ENCODE measurements at regions of chr17 and their contacts with region 1.

Region 1: DNA sequence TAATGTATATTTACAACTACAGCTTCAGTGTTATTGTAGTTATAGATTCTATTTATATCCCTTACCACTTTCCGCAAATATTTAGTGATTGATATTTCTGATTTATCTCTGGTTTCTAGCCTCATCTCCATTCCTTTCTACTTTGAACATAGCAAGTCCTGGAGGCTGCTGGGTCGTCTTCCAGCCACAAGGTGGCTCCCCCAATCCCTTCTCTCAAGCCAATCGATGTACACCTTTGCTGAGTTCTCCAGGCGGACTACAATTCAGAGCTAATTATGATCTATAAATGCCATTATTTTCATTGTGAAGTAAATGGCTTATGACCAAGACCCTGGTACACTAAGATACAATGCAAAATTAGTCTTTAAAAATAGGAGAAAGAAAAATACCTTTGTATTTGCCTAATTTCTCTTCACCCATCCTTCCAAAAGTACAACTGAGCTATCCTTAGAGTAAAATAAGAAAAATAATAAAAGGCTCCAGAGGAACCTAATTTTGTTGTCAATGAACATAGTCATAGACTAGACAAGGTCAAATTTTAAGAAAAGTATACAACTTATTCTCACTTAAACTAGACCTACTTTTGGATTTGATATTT is 122.1 kb downstream of the SKAP1 start:
- DNase-seq: peak in 6 of 9 donors; percentile 25 to 49 (median 34)
- ATAC-seq: peak; percentile 78
- H3K4me3 ChIP-seq: no peak overlapping the region
- H3K4me3 Mint-ChIP-seq: no peak overlapping the region
- H3K27ac ChIP-seq: no peak overlapping the region
- H3K27ac Mint-ChIP-seq: peak overlapping the region in 2 of 9 donors; percentile 1 to 27
- H3K4me1 ChIP-seq: no peaks in the 10 kb centered on the region
- H3K4me1 Mint-ChIP-seq: peaks cover 13 to 57% (median 36%) of the 10 kb centered on the region in 7 donors
- H3K27me3 ChIP-seq: no peaks in the 10 kb centered on the region
- H3K27me3 Mint-ChIP-seq: no peaks in the 10 kb centered on the region

Region 2: GRCh38 chr17:48322060-48322459 is 14.1 kb after region 1 on chr17:
- CTCF ChIA-PET with region 1: interaction called, 6 read pairs
- POLR2A ChIA-PET with region 1: no interaction called
- intact Hi-C with region 1: loop called in 1 of 2 experiments (anchors 2 kb)
- DNase-seq: no peak
- ATAC-seq: no peak
- H3K4me3 ChIP-seq: no peak overlapping the region
- H3K4me3 Mint-ChIP-seq: no peak overlapping the region
- H3K27ac ChIP-seq: no peak overlapping the region
- H3K27ac Mint-ChIP-seq: no peak overlapping the region
- H3K4me1 ChIP-seq: no peaks in the 10 kb centered on the region
- H3K4me1 Mint-ChIP-seq: peaks cover 9 to 48% (median 26%) of the 10 kb centered on the region in 7 donors
- H3K27me3 ChIP-seq: no peaks in the 10 kb centered on the region
- H3K27me3 Mint-ChIP-seq: no peaks in the 10 kb centered on the region

Region 3: GRCh38 chr17:48492401-48493298 is 184.7 kb after region 1 on chr17:
- CTCF ChIA-PET with region 1: no interaction called
- POLR2A ChIA-PET with region 1: no interaction called
- intact Hi-C with region 1: no loop called
- DNase-seq: peak; percentile 38 to 73 (median 58)
- ATAC-seq: peak; percentile 95
- H3K4me3 ChIP-seq: peak overlapping the region; percentile 54
- H3K4me3 Mint-ChIP-seq: peak overlapping the region; percentile 6 to 79 (median 58)
- H3K27ac ChIP-seq: no peak overlapping the region
- H3K27ac Mint-ChIP-seq: peak overlapping the region in 1 of 9 donors; percentile 88
- H3K4me1 ChIP-seq: peaks cover 6 to 7% of the 10 kb centered on the region in 2 donors
- H3K4me1 Mint-ChIP-seq: peaks cover 0 to 58% (median 7%) of the 10 kb centered on the region in 7 donors
- H3K27me3 ChIP-seq: no peaks in the 10 kb centered on the region
- H3K27me3 Mint-ChIP-seq: peaks cover 6 to 26% (median 16%) of the 10 kb centered on the region in 5 donors